ENCODE measurements at regions of chr4 and their contacts with region 1.

Region 1: DNA sequence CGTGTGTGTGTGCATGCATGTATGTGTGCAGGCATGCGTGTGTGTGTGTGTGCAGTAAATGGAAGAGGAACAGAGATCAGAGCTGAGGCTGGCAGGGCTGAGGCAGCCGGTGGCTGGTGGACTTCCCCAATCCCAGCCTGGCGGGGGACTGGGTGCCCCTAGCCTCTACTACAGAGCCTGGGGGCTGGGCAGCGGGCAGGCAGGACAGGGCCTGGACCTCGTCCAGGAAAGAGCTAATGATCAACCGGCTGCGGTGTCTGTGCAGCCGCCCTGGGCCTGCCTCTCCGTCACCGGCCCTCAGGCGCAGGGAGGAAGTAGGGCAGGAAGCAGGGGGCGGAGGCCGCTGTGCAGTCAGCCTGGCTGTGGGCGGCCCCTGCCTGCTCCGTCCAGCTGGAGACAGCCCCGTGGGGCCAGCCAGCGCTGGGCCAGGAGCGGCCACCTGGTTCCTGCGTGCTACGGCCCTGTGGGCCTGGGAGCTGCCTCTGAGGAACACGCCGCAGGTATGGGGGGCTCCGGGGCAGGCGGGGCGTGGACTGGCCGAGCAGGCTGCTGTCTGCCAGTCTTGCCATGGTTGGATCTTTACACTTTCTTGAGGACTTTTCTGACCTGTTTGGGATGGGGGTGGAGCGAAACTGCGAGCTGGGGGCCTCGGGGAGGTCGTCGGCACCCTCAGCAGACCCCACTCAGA is at the start of gene SH3TC1:
- DNase-seq: peak; percentile 92
- H3K4me3 Mint-ChIP-seq: peak within 1 kb of the TSS; percentile 95
- H3K27ac Mint-ChIP-seq: peak within 1 kb of the TSS; percentile 88
- H3K4me1 Mint-ChIP-seq: peaks cover 35% of the 10 kb centered on the region
- H3K27me3 Mint-ChIP-seq: peaks cover 4% of the 10 kb centered on the region
- total RNA-seq, gene SH3TC1: 16.0 and 20.9 TPM in 2 replicates

Region 2: GRCh38 chr4:8158710-8159536 is 40.1 kb before region 1 on chr4 and contains the start of gene ABLIM2:
- intact Hi-C with region 1: loop called (anchors 1 kb)
- DNase-seq: peak; percentile 100
- H3K4me3 Mint-ChIP-seq: peak within 1 kb of the TSS; percentile 97
- H3K27ac Mint-ChIP-seq: peak within 1 kb of the TSS; percentile 82
- H3K4me1 Mint-ChIP-seq: peaks cover 9% of the 10 kb centered on the region
- H3K27me3 Mint-ChIP-seq: peaks cover 27% of the 10 kb centered on the region
- total RNA-seq, gene ABLIM2: 0.28 and 0.63 TPM in 2 replicates

Region 3: DNA sequence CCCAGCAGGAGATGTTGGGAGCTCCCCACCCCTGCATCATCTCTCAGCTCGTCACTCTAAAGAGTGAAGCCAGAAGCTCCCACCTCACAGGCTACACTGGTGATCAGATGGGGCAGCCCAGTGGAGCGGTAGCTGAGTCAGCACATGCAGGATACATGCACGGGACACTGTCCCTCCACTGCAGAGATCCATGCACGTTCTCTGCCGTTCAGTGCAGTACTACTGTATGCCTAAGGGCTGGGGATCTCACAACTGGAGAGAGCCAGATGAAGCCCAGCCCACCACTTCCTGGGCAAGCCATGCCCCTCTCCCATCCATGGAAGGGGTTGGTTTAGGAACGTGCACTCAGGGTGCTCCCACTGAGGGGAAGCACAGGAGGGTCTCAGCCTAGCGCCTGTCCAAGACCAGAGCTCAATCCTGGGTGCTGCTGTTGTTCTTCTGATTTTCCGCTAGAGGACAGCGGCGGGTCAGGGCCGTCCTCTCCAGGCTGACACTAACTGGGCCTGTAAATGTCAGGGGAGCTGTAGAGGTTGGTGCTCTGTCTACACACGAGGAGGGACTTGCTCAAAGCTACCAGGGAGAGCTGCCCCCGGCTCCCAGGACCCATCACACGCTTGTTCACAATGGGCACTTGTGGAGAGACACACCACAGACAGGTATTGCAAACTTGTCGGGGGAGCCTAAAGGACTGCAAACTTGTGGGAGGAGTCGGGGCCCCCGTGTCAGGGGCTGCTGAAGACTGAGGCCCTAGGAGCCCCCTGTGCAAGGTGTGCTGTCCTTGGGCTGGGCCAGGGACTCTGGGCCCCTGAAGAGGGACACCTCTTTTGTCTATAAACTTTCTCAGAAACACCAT is 22.3 kb before region 1 on chr4:
- intact Hi-C with region 1: loop called (anchors 2 kb)
- DNase-seq: peak; percentile 81
- H3K4me3 Mint-ChIP-seq: no peak overlapping the region
- H3K27ac Mint-ChIP-seq: no peak overlapping the region
- H3K4me1 Mint-ChIP-seq: no peaks in the 10 kb centered on the region
- H3K27me3 Mint-ChIP-seq: no peaks in the 10 kb centered on the region

Region 4: GRCh38 chr4:8221476-8221875 is 22.4 kb after region 1 on chr4:
- intact Hi-C with region 1: loop called (anchors 2 kb)
- DNase-seq: no peak
- H3K4me3 Mint-ChIP-seq: no peak overlapping the region
- H3K27ac Mint-ChIP-seq: no peak overlapping the region
- H3K4me1 Mint-ChIP-seq: peaks cover 14% of the 10 kb centered on the region
- H3K27me3 Mint-ChIP-seq: no peaks in the 10 kb centered on the region